Calu3 (cell line): ENCODE measurements at regions of chr10 and their contacts with region 1.

Region 1: DNA sequence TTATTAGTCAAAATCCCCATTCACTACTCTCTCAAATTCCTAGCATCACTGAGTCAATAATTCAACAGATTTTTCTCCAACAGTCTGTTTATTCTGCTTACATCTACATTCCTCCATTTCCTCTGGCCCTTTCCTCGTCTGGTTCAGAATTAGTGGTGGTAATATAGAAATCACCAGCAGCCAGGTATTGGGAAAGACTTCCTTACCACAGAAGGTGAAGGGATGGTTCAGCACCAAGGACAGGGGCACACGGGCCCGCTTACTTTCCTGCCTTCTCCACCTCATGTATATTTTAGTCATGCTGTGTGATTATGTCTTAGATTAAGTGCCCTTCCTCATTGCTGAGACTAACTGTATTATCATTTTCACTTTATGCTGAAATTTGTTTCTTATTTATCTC is 70.4 kb upstream of the APBB1IP start:
- DNase-seq: peak; percentile 79
- H3K4me3 Mint-ChIP-seq: no peak overlapping the region
- H3K27ac Mint-ChIP-seq: peak overlapping the region; percentile 51
- H3K4me1 Mint-ChIP-seq: peaks cover 24% of the 10 kb centered on the region
- H3K27me3 Mint-ChIP-seq: no peaks in the 10 kb centered on the region
- CTCF ChIP-seq: no peak

Region 2: DNA sequence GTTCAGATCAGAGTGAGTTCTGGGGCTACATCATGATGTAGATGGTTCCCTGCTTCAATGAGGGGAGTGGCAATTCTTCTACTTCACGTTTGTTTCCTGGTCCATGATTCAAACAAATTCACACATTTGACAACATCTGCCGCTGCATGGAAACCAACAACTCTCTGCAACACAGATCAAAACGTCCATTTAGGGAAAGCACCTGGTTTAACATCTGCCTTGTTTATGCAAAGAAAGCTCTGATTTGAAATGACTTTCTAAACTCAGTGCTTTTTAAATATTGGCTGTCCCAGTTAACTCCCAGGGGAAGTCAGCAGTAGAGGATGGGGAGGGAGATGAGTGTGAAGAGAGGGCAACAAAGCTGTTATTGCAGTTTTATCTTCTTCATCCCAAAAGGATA is 57.4 kb before region 1 on chr10:
- CTCF ChIA-PET with region 1: no interaction called
- intact Hi-C with region 1: no loop called
- DNase-seq: no peak
- H3K4me3 Mint-ChIP-seq: no peak overlapping the region
- H3K27ac Mint-ChIP-seq: no peak overlapping the region
- H3K4me1 Mint-ChIP-seq: no peaks in the 10 kb centered on the region
- H3K27me3 Mint-ChIP-seq: peaks cover 34% of the 10 kb centered on the region
- CTCF ChIP-seq: no peak

Region 3: GRCh38 chr10:26486991-26487850 is 119.5 kb after region 1 on chr10:
- CTCF ChIA-PET with region 1: no interaction called
- intact Hi-C with region 1: loop called (anchors 5 kb)
- DNase-seq: peak; percentile 52
- H3K4me3 Mint-ChIP-seq: peak overlapping the region; percentile 27
- H3K27ac Mint-ChIP-seq: peak overlapping the region; percentile 96
- H3K4me1 Mint-ChIP-seq: peaks cover 60% of the 10 kb centered on the region
- H3K27me3 Mint-ChIP-seq: no peaks in the 10 kb centered on the region
- CTCF ChIP-seq: no peak